AG04449 (cell line): ENCODE measurements at regions of chr17 and their contacts with region 1.

Region 1: GRCh38 chr17:42577532-42578281 is at the start of gene PSMC3IP:
- DNase-seq: peak; percentile 65
- H3K4me3 ChIP-seq: peak within 1 kb of the TSS; percentile 91
- CTCF ChIP-seq: peak; percentile 68

Region 2: GRCh38 chr17:42361781-42362186 is 215.9 kb before region 1 on chr17:
- CTCF ChIA-PET with region 1: no interaction called
- POLR2A ChIA-PET with region 1: no interaction called
- DNase-seq: no peak
- H3K4me3 ChIP-seq: no peak overlapping the region
- CTCF ChIP-seq: no peak

Region 3: DNA sequence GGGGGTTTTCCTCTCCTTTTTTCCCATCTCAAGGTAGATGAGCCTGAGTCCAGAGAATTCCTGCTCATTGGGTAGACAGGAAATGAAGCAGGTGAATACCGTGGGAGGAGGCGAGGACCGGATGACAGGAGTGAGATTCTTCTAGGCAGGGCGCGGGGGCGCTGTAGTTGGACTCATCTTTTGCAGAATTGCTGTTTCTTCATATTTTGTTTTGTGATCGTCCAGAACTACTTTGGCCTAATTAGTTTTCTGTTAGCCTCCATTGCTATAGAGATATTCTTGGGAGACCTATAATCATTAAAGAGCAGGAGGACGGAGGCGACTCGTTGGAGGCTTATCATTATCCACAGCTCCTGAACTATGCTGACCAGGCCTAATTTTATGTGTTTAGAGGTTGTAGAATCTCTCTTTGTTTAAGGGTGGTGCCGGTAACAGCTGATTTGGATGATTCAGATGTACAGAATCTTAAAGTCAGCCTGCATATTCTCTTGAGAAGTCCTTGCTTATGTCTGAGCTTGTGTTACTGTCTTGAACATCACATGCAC is 118.4 kb before region 1 on chr17:
- CTCF ChIA-PET with region 1: no interaction called
- POLR2A ChIA-PET with region 1: no interaction called
- DNase-seq: no peak
- H3K4me3 ChIP-seq: peak overlapping the region; percentile 78
- CTCF ChIP-seq: peak; percentile 37

Region 4: GRCh38 chr17:42542931-42543539 is 34.7 kb before region 1 on chr17:
- CTCF ChIA-PET with region 1: no interaction called
- POLR2A ChIA-PET with region 1: no interaction called
- DNase-seq: no peak
- H3K4me3 ChIP-seq: no peak overlapping the region
- CTCF ChIP-seq: no peak

Region 5: GRCh38 chr17:42566883-42567573 is 10.7 kb before region 1 on chr17 and contains the start of gene MLX:
- CTCF ChIA-PET with region 1: interaction called, 53 read pairs
- POLR2A ChIA-PET with region 1: interaction called, 20 read pairs
- DNase-seq: no peak
- H3K4me3 ChIP-seq: peak within 1 kb of the TSS; percentile 95
- CTCF ChIP-seq: no peak

Region 6: DNA sequence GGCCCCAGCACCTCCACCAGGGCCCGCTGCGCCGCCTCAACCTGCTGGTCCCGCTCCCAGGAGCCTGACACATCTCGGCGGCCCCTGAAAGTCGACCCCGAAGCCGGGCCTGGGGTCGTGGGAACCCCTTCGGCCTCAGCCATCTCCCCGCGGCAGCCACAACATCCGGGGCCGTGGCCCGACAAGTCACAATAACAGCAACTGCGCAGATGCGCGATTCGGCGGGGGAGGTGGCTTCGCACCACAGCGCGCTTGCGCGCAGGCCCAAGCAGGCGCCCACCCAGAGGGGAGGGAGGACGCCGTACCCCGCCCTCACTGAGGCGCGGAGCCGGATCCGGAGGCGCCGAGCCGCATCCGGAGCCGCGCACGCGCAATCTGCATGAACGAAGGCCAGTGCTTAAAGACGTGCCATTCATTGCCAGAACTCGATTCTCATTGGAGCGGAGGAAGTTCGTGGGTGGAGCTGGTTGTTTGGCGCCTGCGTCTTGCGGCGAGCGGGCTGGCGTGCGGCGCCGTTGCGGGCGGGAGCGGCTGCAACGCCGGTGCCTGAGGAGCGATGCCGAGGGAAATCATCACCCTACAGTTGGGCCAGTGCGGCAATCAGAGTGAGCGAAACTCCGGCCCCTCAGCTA is 31.6 kb after region 1 on chr17 and contains the starts of genes RETREG3 and TUBG1:
- CTCF ChIA-PET with region 1: interaction called, 19 read pairs
- POLR2A ChIA-PET with region 1: interaction called, 6 read pairs
- DNase-seq: peak; percentile 92
- H3K4me3 ChIP-seq: peak within 1 kb of the TSS; percentile 96
- CTCF ChIP-seq: peak; percentile 75

Region 7: DNA sequence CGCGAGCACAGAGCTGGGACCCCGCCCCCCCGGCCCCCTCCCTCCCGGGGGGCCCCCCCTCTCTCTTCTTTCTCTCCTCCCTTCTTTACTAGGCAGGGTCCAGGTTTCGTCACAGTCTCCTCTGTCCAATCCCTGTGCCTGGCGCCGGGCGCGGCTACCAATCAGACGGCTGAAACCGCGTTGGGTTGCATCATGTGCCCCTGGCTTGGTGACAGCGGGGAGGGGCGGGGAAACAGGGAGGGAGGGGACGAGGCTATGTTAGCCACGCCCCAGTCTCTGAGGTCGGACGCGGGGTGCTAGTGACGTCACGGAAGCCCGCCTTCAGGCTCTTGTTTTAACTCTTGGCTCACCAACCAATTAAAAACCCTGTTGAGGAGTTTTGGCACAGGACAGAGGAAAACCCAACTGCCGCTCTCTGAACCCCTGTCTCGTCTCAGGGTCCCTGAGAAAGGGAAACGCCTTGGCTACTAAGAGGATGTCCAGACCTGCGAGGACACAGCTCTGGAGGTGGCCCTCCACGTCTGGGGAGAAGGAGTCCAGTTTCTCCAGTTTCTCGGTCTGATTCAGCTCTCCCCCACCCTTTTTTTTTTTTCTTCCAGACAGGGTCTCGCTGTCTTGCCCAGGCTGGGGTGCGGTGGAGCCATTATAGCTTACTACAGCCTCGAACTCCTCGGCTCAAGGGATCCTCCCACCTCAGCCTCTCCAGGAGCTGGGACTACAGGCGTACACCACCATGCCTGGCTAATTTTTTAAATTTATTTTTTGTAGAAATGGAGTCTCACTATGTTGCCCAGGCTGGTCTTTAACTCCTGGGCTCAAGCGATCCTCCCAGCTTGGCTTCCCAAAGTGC is 99.5 kb after region 1 on chr17:
- CTCF ChIA-PET with region 1: interaction called, 120 read pairs
- POLR2A ChIA-PET with region 1: interaction called, 13 read pairs
- DNase-seq: peak; percentile 94
- H3K4me3 ChIP-seq: peak overlapping the region; percentile 94
- CTCF ChIP-seq: no peak

Region 8: GRCh38 chr17:42760652-42761581 is 183.2 kb after region 1 on chr17 and contains the start of gene RAMP2:
- CTCF ChIA-PET with region 1: interaction called, 47 read pairs
- POLR2A ChIA-PET with region 1: no interaction called
- DNase-seq: no peak
- H3K4me3 ChIP-seq: peak within 1 kb of the TSS; percentile 50
- CTCF ChIP-seq: no peak

Region 9: GRCh38 chr17:42991471-42991870 is 413.8 kb after region 1 on chr17:
- CTCF ChIA-PET with region 1: no interaction called
- POLR2A ChIA-PET with region 1: no interaction called
- DNase-seq: no peak
- H3K4me3 ChIP-seq: no peak overlapping the region
- CTCF ChIP-seq: no peak